ENCODE measurements at regions of chr18 and their contacts with region 1.

Region 1: GRCh38 chr18:26813043-26813442 is 52.5 kb downstream of the AQP4 start:
- DNase-seq: peak; percentile 33 to 39
- H3K4me3 ChIP-seq: no peak overlapping the region
- H3K4me3 Mint-ChIP-seq: no peak overlapping the region
- H3K27ac Mint-ChIP-seq: no peak overlapping the region
- H3K4me1 ChIP-seq: no peaks in the 10 kb centered on the region
- H3K4me1 Mint-ChIP-seq: no peaks in the 10 kb centered on the region
- H3K27me3 ChIP-seq: no peaks in the 10 kb centered on the region
- H3K27me3 Mint-ChIP-seq: peaks cover 10% of the 10 kb centered on the region
- CTCF ChIP-seq: peak in 1 of 2 experiments; percentile 51

Region 2: DNA sequence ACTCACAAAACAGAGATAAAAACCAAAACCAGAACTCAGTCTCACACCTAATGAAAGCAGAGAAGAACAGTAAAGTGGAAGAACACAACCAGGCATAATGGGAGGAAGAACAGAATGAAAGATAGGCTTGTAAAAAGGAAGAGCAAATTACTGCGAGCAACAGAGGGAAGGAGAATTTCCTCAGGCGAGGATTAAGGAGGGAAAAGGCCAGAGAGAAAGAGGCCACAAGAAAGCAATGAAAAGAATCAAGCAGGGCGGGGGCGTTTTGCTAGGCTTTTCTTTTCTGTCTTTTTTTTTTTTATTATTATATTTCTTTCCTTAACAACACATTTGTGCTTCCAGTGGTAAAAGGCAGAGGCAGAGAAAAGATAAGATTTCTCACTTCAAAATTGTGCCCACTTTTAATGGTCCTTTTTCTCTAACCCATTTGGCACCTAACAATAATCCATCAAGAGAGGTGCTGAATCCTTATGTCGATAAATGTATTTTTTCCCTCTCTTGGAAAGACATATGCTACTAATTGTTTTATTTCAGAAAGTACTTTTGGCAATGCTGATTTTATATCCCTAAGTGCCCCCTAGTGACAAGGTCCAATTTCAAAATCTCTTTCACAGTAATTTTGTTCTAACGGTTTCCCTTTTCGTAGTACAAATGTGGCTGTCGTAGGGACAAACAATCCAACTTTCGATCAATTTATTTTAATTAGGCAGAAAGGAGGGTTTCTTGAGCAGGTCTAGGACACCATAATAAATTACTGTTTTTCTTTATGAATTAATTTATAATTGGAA is 191.2 kb after region 1 on chr18:
- CTCF ChIA-PET with region 1: no interaction called
- POLR2A ChIA-PET with region 1: no interaction called
- intact Hi-C with region 1: loop called (anchors 5 kb)
- DNase-seq: no peak
- H3K4me3 ChIP-seq: no peak overlapping the region
- H3K4me3 Mint-ChIP-seq: no peak overlapping the region
- H3K27ac Mint-ChIP-seq: no peak overlapping the region
- H3K4me1 ChIP-seq: no peaks in the 10 kb centered on the region
- H3K4me1 Mint-ChIP-seq: no peaks in the 10 kb centered on the region
- H3K27me3 ChIP-seq: no peaks in the 10 kb centered on the region
- H3K27me3 Mint-ChIP-seq: no peaks in the 10 kb centered on the region
- CTCF ChIP-seq: no peak

Region 3: GRCh38 chr18:27298214-27298804 is 485.3 kb after region 1 on chr18:
- CTCF ChIA-PET with region 1: no interaction called
- POLR2A ChIA-PET with region 1: no interaction called
- intact Hi-C with region 1: loop called (anchors 1 kb)
- DNase-seq: peak in 1 of 2 experiments; percentile 7
- H3K4me3 ChIP-seq: no peak overlapping the region
- H3K4me3 Mint-ChIP-seq: no peak overlapping the region
- H3K27ac Mint-ChIP-seq: no peak overlapping the region
- H3K4me1 ChIP-seq: no peaks in the 10 kb centered on the region
- H3K4me1 Mint-ChIP-seq: no peaks in the 10 kb centered on the region
- H3K27me3 ChIP-seq: no peaks in the 10 kb centered on the region
- H3K27me3 Mint-ChIP-seq: peaks cover 2% of the 10 kb centered on the region
- CTCF ChIP-seq: peak; percentile 19 to 25